Activated naive CD8-positive, alpha-beta T cell treated with anti-CD3 and anti-CD28 coated beads, Interleukin-2, amount 10 ng/mL, durations not matched to agents 7 days and 5 days (primary cell): ENCODE measurements at regions of chr7 and their contacts with region 1.

Region 1: GRCh38 chr7:7566651-7567611 is at the start of gene MIOS:
- DNase-seq: peak; percentile 90
- ATAC-seq: peak; percentile 86
- H3K4me3 Mint-ChIP-seq: peak within 1 kb of the TSS; percentile 82
- H3K27ac Mint-ChIP-seq: peak within 1 kb of the TSS; percentile 87
- H3K4me1 Mint-ChIP-seq: peaks cover 24% of the 10 kb centered on the region
- H3K27me3 Mint-ChIP-seq: no peaks in the 10 kb centered on the region
- total RNA-seq, gene MIOS: 42.0 to 42.1 TPM

Region 2: GRCh38 chr7:7478569-7478968 is 88.4 kb before region 1 on chr7:
- POLR2A ChIA-PET with region 1: no interaction called
- DNase-seq: no peak
- ATAC-seq: no peak
- H3K4me3 Mint-ChIP-seq: no peak overlapping the region
- H3K27ac Mint-ChIP-seq: no peak overlapping the region
- H3K4me1 Mint-ChIP-seq: no peaks in the 10 kb centered on the region
- H3K27me3 Mint-ChIP-seq: peaks cover 5% of the 10 kb centered on the region

Region 3: GRCh38 chr7:7535691-7536090 is 31.2 kb before region 1 on chr7 and contains the start of gene COL28A1:
- POLR2A ChIA-PET with region 1: no interaction called
- DNase-seq: no peak
- ATAC-seq: no peak
- H3K4me3 Mint-ChIP-seq: no peak within 1 kb of the TSS
- H3K27ac Mint-ChIP-seq: no peak within 1 kb of the TSS
- H3K4me1 Mint-ChIP-seq: no peaks in the 10 kb centered on the region
- H3K27me3 Mint-ChIP-seq: peaks cover 9% of the 10 kb centered on the region
- total RNA-seq, gene COL28A1: not detected

Region 4: DNA sequence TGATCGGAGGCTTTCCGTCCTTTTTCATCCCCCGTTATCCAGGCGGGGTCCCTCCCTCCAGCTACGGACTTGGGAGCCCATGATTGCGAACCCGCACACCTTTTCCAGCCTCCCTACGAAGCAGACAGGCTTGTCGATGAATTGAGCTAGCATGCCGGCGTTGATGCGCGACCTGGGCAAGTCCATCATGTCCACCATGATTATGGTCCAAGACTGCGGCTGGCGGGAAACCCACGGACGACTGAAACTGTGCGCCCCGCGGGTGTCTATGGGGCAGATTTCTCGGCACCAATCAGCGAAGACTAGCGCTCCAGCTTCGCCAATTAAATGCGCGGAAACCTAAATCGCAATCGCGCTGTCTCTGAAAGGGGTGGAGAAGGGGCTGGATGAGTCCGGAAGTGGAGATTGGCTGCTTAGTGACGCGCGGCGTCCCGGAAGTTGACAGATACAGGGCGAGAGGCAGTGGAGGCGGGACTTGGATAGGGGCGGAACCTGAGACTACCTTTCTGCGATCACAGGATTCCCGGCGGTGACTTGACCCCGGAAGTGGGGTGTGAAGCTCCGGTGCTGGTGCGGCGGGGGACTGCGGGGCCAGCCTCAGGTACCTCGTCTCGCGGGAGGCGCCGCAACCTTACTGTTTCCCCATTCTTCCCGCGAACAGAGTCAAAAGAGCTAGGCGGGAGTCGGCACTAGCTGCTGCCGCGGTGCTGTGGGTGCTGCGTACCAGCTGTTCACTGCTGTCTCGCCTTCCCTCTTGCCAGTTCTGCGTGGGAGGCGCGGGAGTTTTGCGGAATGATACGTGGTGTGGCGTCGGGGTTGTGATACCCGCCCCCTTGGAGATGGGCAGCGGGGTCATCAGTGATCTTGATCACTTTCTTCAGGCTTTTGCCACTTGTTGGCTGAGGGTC is 73.5 kb after region 1 on chr7 and contains the start of gene UMAD1:
- POLR2A ChIA-PET with region 1: interaction called, 14 read pairs
- DNase-seq: peak; percentile 93
- ATAC-seq: peak; percentile 93
- H3K4me3 Mint-ChIP-seq: peak within 1 kb of the TSS; percentile 95
- H3K27ac Mint-ChIP-seq: peak within 1 kb of the TSS; percentile 96
- H3K4me1 Mint-ChIP-seq: peaks cover 25% of the 10 kb centered on the region
- H3K27me3 Mint-ChIP-seq: no peaks in the 10 kb centered on the region
- total RNA-seq, gene UMAD1: 14.4 to 18.4 TPM